Common myeloid progenitor, CD34-positive (primary cell): ENCODE measurements at regions of chr20 and their contacts with region 1.

Region 1: DNA sequence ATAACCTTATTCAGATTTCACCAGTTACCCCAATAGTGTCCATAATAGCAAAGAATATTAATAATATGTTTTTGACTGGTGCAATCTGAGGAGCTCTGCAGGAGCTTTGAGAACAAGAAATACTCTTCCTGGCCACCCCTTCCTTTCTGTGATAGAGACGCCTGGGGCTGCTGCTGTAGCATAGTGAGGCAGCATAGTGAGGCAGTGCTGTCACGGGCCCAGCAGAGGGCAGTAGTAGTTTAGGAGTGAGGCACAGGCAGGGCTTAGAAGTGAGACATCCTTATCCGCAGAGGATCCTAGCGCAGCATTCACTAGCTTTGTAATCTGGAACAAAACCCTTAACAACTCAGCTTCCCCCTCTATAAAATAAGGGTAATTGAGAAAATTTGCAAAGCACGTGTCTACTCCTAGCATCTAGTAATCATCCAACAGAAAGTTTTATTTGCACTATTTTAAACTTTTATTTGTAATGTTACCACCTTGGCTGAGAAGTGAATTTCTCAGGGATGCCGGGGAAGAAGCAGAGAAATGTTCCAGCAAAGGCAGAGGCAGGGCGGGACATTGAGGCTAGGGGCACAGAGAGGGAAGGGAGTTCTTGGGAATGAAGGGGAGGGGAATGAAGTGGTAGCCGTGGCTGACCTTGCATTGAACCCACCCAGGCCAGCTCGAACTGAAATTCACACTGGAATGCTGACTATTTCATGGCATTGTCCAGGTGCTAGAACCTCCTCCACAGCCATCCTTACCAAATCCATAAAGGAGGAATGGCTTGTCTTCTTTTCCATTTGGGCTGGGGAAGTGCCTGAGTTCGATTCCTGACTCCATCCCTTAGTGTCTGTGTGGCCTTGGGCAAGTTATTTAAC is 78.8 kb downstream of the CDS2 start:
- DNase-seq: peak; percentile 69 to 81 (median 75)
- H3K4me3 ChIP-seq: no peak overlapping the region
- H3K27ac ChIP-seq: no peak overlapping the region
- H3K4me1 ChIP-seq: no peaks in the 10 kb centered on the region
- H3K27me3 ChIP-seq: no peaks in the 10 kb centered on the region

Region 2: DNA sequence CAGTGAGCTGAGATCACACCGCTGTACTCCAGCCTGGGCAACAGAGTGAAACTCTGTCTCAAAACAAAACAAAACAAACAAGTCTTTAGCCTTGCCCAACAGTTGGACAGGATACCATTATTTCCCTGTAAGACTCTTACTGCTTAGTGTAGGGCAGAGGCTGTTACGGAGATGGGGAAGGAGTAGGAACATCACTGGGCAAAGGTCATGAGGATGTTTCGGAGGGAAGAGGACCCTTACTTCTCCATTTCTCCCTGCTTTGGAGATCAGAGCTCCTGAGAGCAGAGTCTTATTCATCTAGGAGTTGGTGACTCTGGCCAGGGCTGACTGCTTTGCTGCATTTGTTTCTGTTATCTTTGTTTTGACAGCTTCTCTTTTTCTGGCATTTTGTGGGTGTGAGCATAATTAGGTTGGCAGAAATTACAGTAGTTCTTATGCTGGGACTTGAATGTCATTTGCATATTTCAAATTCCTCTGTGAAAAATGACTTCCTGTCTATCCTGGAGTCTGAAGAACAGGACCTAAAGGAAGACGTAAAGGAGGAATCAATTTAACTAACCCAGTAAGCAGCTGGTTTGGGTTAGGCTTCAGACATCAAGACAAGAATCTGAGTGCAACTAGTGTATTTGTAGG is 10.2 kb after region 1 on chr20:
- CTCF ChIA-PET with region 1: interaction called, 78 read pairs
- POLR2A ChIA-PET with region 1: no interaction called
- DNase-seq: no peak
- H3K4me3 ChIP-seq: no peak overlapping the region
- H3K27ac ChIP-seq: no peak overlapping the region
- H3K4me1 ChIP-seq: no peaks in the 10 kb centered on the region
- H3K27me3 ChIP-seq: no peaks in the 10 kb centered on the region

Region 3: DNA sequence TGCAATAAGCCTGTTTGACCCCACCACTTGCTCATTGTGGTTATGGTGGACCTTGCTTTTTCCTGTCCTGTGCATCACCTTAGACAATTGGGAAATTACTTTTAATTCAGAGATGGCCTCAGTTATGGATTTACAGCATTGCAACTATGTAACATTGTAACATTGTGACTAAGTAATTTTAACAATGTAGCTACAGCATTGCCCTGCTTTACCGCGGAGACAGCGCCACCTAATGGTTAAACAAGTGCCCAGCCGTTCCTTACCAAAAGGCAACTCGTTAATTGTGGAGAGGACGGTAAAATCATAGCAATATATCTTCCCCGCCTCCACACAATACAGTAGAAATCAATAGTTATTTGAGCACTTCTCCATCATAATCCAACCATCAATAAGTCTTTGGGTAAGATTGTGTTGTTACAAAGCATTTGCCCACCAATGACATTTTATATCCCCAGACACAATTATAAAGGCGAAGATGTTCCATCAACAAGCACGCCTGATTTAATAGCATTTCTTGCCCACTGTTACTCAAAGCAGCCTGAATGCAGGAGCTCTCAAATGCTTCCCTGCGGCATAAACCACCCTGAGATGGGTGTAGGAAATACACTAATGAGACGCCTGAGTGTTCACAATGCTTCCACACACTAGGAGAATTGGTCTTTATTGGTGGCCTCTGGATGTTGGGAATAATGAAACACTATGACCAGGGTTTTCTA is 17.5 kb after region 1 on chr20:
- CTCF ChIA-PET with region 1: interaction called, 78 read pairs
- POLR2A ChIA-PET with region 1: no interaction called
- DNase-seq: peak; percentile 54 to 75 (median 69)
- H3K4me3 ChIP-seq: no peak overlapping the region
- H3K27ac ChIP-seq: no peak overlapping the region
- H3K4me1 ChIP-seq: no peaks in the 10 kb centered on the region
- H3K27me3 ChIP-seq: peaks cover 0 to 3% (median 0%) of the 10 kb centered on the region in 5 experiments